ENCODE measurements at regions of chr17 and their contacts with region 1.

Region 1: GRCh38 chr17:28717578-28718333 is at the start of gene RAB34:
- DNase-seq: no peak
- H3K4me3 Mint-ChIP-seq: peak within 1 kb of the TSS; percentile 83
- H3K27ac Mint-ChIP-seq: peak within 1 kb of the TSS; percentile 84
- H3K4me1 Mint-ChIP-seq: peaks cover 28% of the 10 kb centered on the region
- H3K27me3 Mint-ChIP-seq: peaks cover 15% of the 10 kb centered on the region
- total RNA-seq, gene RAB34: 19.4 and 21.5 TPM in 2 replicates

Region 2: DNA sequence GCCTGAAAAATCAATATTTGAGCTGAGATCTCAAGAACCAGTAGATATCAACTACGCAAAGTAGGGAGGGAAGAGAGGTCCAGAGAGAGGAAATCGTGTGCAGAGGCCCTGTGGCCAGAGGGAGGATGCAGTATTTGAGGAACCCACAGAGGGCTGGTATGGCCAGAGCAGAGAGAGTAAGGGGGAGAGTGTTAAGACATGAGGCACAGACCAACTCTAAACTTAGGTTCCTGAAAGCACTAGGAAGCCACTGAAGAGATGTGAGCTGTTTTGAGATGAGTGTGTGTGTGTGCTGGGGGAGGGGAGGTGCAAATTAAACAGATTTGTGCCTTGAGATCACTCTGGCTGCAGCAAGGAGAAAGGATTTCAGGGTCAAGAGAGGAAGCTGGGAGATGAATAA is 233.5 kb before region 1 on chr17:
- intact Hi-C with region 1: no loop called
- DNase-seq: no peak
- H3K4me3 Mint-ChIP-seq: no peak overlapping the region
- H3K27ac Mint-ChIP-seq: no peak overlapping the region
- H3K4me1 Mint-ChIP-seq: peaks cover 11% of the 10 kb centered on the region
- H3K27me3 Mint-ChIP-seq: peaks cover 1% of the 10 kb centered on the region

Region 3: DNA sequence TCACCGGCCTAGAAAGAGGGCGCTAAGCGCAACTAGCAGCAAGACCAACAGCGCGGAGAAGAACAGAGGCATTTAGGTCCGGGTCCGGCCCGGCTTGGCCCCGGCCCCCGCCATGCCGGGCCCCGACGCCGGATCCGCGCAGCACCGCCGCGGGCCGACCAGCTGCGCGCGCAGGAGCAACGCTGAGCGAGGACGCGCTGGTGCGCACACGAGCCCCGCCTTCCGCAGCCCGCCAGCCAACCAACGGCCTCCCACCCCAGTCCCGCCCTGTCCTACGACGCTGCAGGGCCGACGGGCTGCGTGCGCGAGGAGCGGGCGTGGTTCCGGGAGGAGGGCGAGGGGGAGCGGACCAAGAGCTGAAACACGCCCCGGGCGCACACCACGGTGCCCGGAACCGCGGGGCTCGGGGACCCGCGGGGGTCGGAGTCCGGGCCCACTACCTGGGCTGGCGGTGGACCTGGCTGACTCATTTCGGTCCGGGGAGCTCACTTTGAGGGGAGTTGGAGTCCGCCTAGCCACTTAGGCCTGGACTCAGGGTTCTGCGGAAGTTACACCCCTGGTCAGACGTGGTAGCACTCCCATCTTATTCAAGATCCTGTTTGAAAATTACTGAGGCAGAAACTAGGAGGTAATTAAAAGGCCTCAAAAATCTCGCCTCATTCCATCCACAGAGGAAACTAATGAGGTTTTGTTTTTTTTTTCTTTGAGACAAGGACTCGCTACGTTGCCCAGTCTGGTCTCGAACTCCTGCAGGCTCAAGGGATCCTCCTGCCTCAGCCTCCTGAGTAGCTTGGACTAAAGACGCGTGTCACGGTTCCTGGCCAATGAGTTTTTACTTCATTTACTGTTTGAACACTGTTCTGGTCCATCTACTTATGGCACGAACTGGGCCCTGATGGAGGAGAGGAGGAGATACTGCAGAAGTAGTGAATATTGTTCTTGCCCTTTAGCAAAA is 72.5 kb before region 1 on chr17 and contains the start of gene BLTP2:
- intact Hi-C with region 1: loop called (anchors 2 kb)
- DNase-seq: peak; percentile 94
- H3K4me3 Mint-ChIP-seq: peak within 1 kb of the TSS; percentile 94
- H3K27ac Mint-ChIP-seq: peak within 1 kb of the TSS; percentile 86
- H3K4me1 Mint-ChIP-seq: peaks cover 35% of the 10 kb centered on the region
- H3K27me3 Mint-ChIP-seq: no peaks in the 10 kb centered on the region
- total RNA-seq, gene BLTP2: 196 and 213 TPM in 2 replicates

Region 4: GRCh38 chr17:28750178-28751047 is 32.7 kb after region 1 on chr17:
- intact Hi-C with region 1: loop called (anchors 5 kb)
- DNase-seq: peak; percentile 82
- H3K4me3 Mint-ChIP-seq: no peak overlapping the region
- H3K27ac Mint-ChIP-seq: no peak overlapping the region
- H3K4me1 Mint-ChIP-seq: peaks cover 11% of the 10 kb centered on the region
- H3K27me3 Mint-ChIP-seq: no peaks in the 10 kb centered on the region

Region 5: GRCh38 chr17:28951991-28952975 is 234.5 kb after region 1 on chr17:
- intact Hi-C with region 1: loop called (anchors 1 kb)
- DNase-seq: peak; percentile 95
- H3K4me3 Mint-ChIP-seq: no peak overlapping the region
- H3K27ac Mint-ChIP-seq: no peak overlapping the region
- H3K4me1 Mint-ChIP-seq: peaks cover 9% of the 10 kb centered on the region
- H3K27me3 Mint-ChIP-seq: no peaks in the 10 kb centered on the region